Caco-2 (cell line): ENCODE measurements at regions of chr17 and their contacts with region 1.

Region 1: GRCh38 chr17:81328978-81329919 is 34.1 kb upstream of the SLC38A10 start:
- DNase-seq: peak; percentile 98
- H3K4me3 ChIP-seq: peak overlapping the region; percentile 29
- H3K4me3 Mint-ChIP-seq: peak overlapping the region; percentile 74
- H3K27ac Mint-ChIP-seq: peak overlapping the region; percentile 95
- H3K4me1 ChIP-seq: peaks cover 54% of the 10 kb centered on the region
- H3K4me1 Mint-ChIP-seq: peaks cover 27% of the 10 kb centered on the region
- H3K27me3 ChIP-seq: no peaks in the 10 kb centered on the region
- H3K27me3 Mint-ChIP-seq: no peaks in the 10 kb centered on the region
- CTCF ChIP-seq: no peak

Region 2: GRCh38 chr17:81285179-81285878 is 43.9 kb before region 1 on chr17:
- CTCF ChIA-PET with region 1: no interaction called
- POLR2A ChIA-PET with region 1: no interaction called
- intact Hi-C with region 1: no loop called
- DNase-seq: no peak
- H3K4me3 ChIP-seq: no peak overlapping the region
- H3K4me3 Mint-ChIP-seq: no peak overlapping the region
- H3K27ac Mint-ChIP-seq: no peak overlapping the region
- H3K4me1 ChIP-seq: no peaks in the 10 kb centered on the region
- H3K4me1 Mint-ChIP-seq: no peaks in the 10 kb centered on the region
- H3K27me3 ChIP-seq: no peaks in the 10 kb centered on the region
- H3K27me3 Mint-ChIP-seq: no peaks in the 10 kb centered on the region
- CTCF ChIP-seq: no peak

Region 3: GRCh38 chr17:81340607-81341515 is 11.6 kb after region 1 on chr17:
- CTCF ChIA-PET with region 1: interaction called, 5 read pairs
- POLR2A ChIA-PET with region 1: interaction called, 11 read pairs
- intact Hi-C with region 1: loop called (anchors 1 kb)
- DNase-seq: peak; percentile 61 to 68
- H3K4me3 ChIP-seq: peak overlapping the region; percentile 91
- H3K4me3 Mint-ChIP-seq: peak overlapping the region; percentile 85
- H3K27ac Mint-ChIP-seq: peak overlapping the region; percentile 29
- H3K4me1 ChIP-seq: peaks cover 42% of the 10 kb centered on the region
- H3K4me1 Mint-ChIP-seq: peaks cover 10% of the 10 kb centered on the region
- H3K27me3 ChIP-seq: no peaks in the 10 kb centered on the region
- H3K27me3 Mint-ChIP-seq: no peaks in the 10 kb centered on the region
- CTCF ChIP-seq: no peak

Region 4: DNA sequence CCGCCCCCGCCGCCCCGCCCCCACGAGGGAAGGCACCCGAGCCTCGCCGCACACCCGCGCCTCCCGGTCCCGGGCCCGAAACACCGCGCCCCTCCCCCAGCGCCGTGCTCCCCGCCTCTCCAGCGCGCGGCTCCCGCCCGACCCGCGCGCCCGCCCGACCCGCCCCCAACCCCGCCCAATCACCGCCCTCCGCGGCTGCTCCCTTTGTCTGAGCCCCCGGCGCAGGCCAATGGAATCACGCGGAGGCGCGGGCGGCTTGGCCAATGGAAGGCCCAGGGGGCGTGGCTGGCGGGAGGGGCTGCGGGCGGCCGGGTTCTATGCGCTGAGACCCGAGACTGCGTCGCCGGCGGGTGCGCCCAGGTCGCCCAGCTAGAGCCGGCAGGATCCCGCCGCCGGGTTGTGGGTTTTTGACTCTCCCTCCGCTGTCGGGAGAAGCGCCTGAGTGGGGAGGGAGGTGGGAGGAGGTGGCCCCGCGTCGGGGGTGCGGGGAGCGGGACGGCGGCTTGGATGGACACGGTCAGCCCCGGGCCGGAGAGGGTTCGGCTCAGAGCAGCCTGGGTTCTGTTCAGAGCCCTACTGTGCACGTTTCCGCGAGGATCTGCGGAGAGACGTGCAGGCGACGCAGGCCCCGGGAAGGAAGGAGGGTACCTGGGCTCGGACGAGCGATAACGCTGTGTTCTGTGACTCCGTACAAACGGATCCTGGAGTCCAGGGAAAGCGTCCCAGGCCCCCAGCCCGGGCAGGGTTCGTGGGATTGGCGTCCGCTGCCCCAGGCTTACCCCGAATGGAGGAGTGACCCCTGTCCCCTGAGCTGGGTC is 17.1 kb after region 1 on chr17:
- CTCF ChIA-PET with region 1: interaction called, 5 read pairs
- POLR2A ChIA-PET with region 1: interaction called, 11 read pairs
- intact Hi-C with region 1: no loop called
- DNase-seq: peak; percentile 98 to 100
- H3K4me3 ChIP-seq: peak overlapping the region; percentile 91
- H3K4me3 Mint-ChIP-seq: peak overlapping the region; percentile 85
- H3K27ac Mint-ChIP-seq: peak overlapping the region; percentile 90
- H3K4me1 ChIP-seq: peaks cover 12% of the 10 kb centered on the region
- H3K4me1 Mint-ChIP-seq: peaks cover 18% of the 10 kb centered on the region
- H3K27me3 ChIP-seq: no peaks in the 10 kb centered on the region
- H3K27me3 Mint-ChIP-seq: no peaks in the 10 kb centered on the region
- CTCF ChIP-seq: no peak

Region 5: DNA sequence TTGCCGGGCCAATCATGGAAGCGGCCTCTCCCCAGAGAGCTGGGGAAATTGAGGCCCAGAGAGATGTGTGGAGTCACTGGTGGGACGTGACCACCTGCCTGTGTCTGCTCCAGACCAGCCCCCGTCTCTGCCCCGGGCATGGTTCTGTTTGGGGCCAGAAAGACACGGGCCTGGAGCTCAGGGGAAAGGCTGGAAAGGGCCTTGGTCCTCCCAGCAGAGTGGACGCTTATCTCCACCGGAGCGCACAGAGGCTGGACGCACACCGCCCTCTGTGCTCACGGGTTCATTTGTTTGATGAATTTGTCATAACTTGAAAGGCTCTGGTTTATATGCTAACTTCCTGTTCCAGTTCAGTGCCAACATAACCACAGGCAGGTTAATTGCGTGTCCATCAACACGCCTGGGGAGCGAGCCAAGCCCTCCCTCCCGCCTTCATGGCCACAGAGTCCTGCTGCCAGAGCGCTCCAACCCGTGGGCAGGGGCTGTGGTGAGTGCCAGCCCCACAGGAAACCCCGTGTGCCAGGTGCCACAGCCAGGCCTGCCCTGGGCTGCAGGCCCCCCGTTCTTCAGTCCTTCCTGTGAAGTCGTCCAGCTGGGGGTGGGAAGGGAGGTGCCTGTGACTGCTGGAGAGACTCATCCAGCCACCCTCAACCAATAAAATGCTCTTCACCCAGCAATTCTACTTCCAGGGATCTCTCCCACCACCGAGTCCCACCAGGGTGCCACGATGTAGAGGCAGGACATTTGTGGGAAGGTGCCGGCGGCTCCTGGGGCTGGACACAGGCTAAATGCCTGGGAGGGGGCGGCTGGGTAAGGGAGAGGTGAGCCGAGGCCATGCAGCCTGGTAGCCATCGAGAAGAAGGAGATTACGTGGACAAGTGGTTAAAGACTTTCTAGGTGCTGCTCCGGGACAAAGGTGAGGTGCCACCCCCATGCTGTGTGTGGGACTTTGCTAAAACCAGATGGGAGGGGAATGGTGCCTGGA is 36.6 kb after region 1 on chr17:
- CTCF ChIA-PET with region 1: no interaction called
- POLR2A ChIA-PET with region 1: no interaction called
- intact Hi-C with region 1: no loop called
- DNase-seq: no peak
- H3K4me3 ChIP-seq: no peak overlapping the region
- H3K4me3 Mint-ChIP-seq: no peak overlapping the region
- H3K27ac Mint-ChIP-seq: no peak overlapping the region
- H3K4me1 ChIP-seq: peaks cover 19% of the 10 kb centered on the region
- H3K4me1 Mint-ChIP-seq: peaks cover 13% of the 10 kb centered on the region
- H3K27me3 ChIP-seq: no peaks in the 10 kb centered on the region
- H3K27me3 Mint-ChIP-seq: no peaks in the 10 kb centered on the region
- CTCF ChIP-seq: no peak

Region 6: DNA sequence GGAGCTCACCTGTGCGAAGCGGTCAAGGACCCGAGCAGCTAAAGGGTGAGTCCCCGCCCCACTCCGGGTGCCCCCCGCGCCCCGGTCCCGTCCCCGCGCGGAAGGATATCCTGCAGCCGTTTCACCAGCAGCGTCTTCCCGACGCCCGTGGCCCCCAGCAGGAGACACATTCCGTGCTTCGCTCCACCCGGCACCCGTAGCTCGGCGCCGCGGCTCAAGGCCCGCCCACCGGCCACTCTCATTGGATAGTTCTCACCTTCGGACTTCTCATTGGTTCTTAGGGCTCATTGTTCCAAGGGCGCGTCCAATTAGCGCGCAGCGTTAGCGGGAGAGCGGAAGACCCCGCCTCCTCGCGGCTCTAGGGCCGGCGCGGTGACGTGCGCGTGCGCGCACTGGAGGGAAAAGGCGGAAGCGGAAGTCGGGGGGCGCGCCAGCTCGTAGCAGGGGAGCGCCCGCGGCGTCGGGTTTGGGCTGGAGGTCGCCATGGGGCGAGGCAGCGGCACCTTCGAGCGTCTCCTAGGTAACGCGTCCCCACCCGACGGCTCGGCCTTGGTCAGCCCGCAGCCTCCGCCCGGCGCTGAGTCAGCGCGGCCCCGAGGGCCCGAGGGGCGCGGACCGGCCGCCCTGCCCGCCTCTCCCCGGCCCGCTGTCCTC is 354.5 kb after region 1 on chr17 and contains the starts of genes ARL16 and HGS:
- CTCF ChIA-PET with region 1: no interaction called
- POLR2A ChIA-PET with region 1: no interaction called
- intact Hi-C with region 1: no loop called
- DNase-seq: peak; percentile 98 to 99
- H3K4me3 ChIP-seq: peak within 1 kb of the TSS; percentile 89
- H3K4me3 Mint-ChIP-seq: peak within 1 kb of the TSS; percentile 97
- H3K27ac Mint-ChIP-seq: peak within 1 kb of the TSS; percentile 95
- H3K4me1 ChIP-seq: 0 out of 2 replicates have a peak, but pooled peaks cover 10% of the 10 kb centered on the region
- H3K4me1 Mint-ChIP-seq: no peaks in the 10 kb centered on the region
- H3K27me3 ChIP-seq: no peaks in the 10 kb centered on the region
- H3K27me3 Mint-ChIP-seq: no peaks in the 10 kb centered on the region
- CTCF ChIP-seq: no peak
- total RNA-seq, gene ARL16: 45.1 and 49.8 TPM in 2 replicates
- total RNA-seq, gene HGS: 176 and 178 TPM in 2 replicates